GM23248 (cell line): ENCODE measurements at regions of chr4 and their contacts with region 1.

Region 1: DNA sequence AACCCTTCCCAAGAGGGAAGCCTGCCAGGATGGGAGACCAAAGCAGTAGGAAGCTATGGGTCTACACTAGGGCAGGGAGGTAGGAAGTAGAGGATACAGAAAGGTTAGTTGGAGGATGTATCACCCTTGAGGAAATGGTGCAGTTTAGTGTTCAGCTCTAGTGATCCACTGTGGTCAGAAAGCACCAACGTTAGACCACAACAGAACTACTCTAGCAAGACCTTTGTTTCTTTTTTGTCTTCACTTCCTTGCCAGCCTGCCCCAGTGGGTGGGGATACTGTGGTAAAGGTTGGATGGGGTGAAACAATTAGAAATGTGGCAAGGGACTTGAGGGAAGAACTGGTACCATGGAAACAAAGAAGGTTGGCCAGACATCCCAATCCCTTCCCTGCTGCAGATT is 83.3 kb downstream of the DDIT4L start:
- DNase-seq: no peak
- H3K4me3 ChIP-seq: no peak overlapping the region
- H3K27ac ChIP-seq: no peak overlapping the region
- H3K4me1 ChIP-seq: no peaks in the 10 kb centered on the region
- H3K27me3 ChIP-seq: no peaks in the 10 kb centered on the region

Region 2: DNA sequence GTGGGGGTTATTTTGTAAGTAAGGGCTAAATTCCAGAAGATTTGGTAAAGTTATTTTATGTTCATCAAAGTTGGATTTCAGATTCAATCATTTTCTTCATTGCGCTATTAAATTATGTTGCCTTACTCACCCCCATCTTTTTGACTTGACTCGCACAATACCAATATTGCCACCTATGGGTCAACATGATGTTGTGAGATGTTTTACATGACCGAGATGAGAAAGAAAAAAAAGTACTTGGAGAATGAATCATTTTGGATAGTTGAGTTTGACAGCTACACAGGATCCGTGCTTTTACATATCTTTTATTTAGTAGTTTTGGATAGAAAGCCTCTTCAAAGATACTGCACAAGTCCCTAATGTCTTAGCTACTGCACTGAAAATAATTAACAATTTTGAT is 635.1 kb after region 1 on chr4:
- in situ Hi-C with region 1: loop called (anchors 25 kb)
- DNase-seq: peak; percentile 67
- H3K4me3 ChIP-seq: no peak overlapping the region
- H3K27ac ChIP-seq: no peak overlapping the region
- H3K4me1 ChIP-seq: peaks cover 18% of the 10 kb centered on the region
- H3K27me3 ChIP-seq: no peaks in the 10 kb centered on the region

Region 3: DNA sequence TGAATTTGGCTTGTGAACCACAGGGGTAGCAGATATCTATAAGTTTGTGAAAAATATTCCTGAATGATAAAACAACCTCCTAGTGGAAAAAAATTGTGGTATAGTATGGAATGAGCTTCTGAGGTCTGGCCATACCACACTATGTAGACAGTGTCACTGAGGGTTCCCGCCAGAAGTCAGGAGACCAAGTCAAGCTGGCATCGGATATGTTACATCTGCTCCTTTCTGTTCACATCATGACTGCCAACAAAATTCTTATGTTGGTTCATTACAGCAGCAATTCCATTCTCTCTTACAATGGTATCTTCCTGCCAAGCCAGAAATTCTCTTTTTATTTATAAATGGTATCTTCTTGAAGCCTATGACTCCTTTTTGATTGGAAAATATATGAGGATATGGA is 967.3 kb after region 1 on chr4:
- in situ Hi-C with region 1: no loop called
- DNase-seq: no peak
- H3K4me3 ChIP-seq: no peak overlapping the region
- H3K27ac ChIP-seq: no peak overlapping the region
- H3K4me1 ChIP-seq: peaks cover 9% of the 10 kb centered on the region
- H3K27me3 ChIP-seq: no peaks in the 10 kb centered on the region